Testis (tissue), 5 donors: ENCODE measurements at regions of chr4 and their contacts with region 1.

Region 1: GRCh38 chr4:152605641-152606335 is 69.9 kb upstream of the FBXW7 start:
- DNase-seq: no peak
- H3K4me3 ChIP-seq: no peak overlapping the region
- H3K27ac ChIP-seq: no peak overlapping the region
- H3K4me1 ChIP-seq: no peaks in the 10 kb centered on the region
- H3K27me3 ChIP-seq: no peaks in the 10 kb centered on the region
- CTCF ChIP-seq: no peak
- POLR2A ChIP-seq: no peak

Region 2: GRCh38 chr4:150814873-150815272 is 1790.9 kb before region 1 on chr4:
- intact Hi-C with region 1: loop called (anchors 5 kb)
- DNase-seq: no peak
- H3K4me3 ChIP-seq: no peak overlapping the region
- H3K27ac ChIP-seq: no peak overlapping the region
- H3K4me1 ChIP-seq: no peaks in the 10 kb centered on the region
- H3K27me3 ChIP-seq: no peaks in the 10 kb centered on the region
- CTCF ChIP-seq: no peak
- POLR2A ChIP-seq: no peak

Region 3: GRCh38 chr4:152663203-152664066 is 57.6 kb after region 1 on chr4:
- intact Hi-C with region 1: no loop called
- DNase-seq: no peak
- H3K4me3 ChIP-seq: no peak overlapping the region
- H3K27ac ChIP-seq: no peak overlapping the region
- H3K4me1 ChIP-seq: no peaks in the 10 kb centered on the region
- H3K27me3 ChIP-seq: no peaks in the 10 kb centered on the region
- CTCF ChIP-seq: no peak
- POLR2A ChIP-seq: no peak